ENCODE measurements at regions of chr3 and their contacts with region 1.

Region 1: GRCh38 chr3:70090322-70090913 is 90.9 kb downstream of the SAMMSON start:
- DNase-seq: peak in 1 of 35 experiments; percentile 4
- ATAC-seq: no peak
- H3K4me3 ChIP-seq: no peak overlapping the region
- H3K4me3 Mint-ChIP-seq: no peak overlapping the region
- H3K27ac ChIP-seq: no peak overlapping the region
- H3K27ac Mint-ChIP-seq: no peak overlapping the region
- H3K4me1 ChIP-seq: no peaks in the 10 kb centered on the region
- H3K4me1 Mint-ChIP-seq: no peaks in the 10 kb centered on the region
- H3K27me3 ChIP-seq: no peaks in the 10 kb centered on the region
- H3K27me3 Mint-ChIP-seq: peaks cover 1 to 9% of the 10 kb centered on the region in 2 donors

Region 2: GRCh38 chr3:70078778-70079177 is 11.6 kb before region 1 on chr3:
- CTCF ChIA-PET with region 1: interaction called in 1 of 2 experiments, 11 read pairs
- POLR2A ChIA-PET with region 1: no interaction called
- DNase-seq: no peak
- ATAC-seq: no peak
- H3K4me3 ChIP-seq: no peak overlapping the region
- H3K4me3 Mint-ChIP-seq: no peak overlapping the region
- H3K27ac ChIP-seq: no peak overlapping the region
- H3K27ac Mint-ChIP-seq: no peak overlapping the region
- H3K4me1 ChIP-seq: no peaks in the 10 kb centered on the region
- H3K4me1 Mint-ChIP-seq: no peaks in the 10 kb centered on the region
- H3K27me3 ChIP-seq: peaks cover 0 to 8% of the 10 kb centered on the region in 2 experiments
- H3K27me3 Mint-ChIP-seq: peaks cover 17 to 27% of the 10 kb centered on the region in 2 donors